ENCODE measurements at regions of chr1 and their contacts with region 1.

Region 1: GRCh38 chr1:11719313-11720032 is 16.5 kb upstream of the AGTRAP start:
- DNase-seq: peak; percentile 80
- CTCF ChIP-seq: peak; percentile 97

Region 2: GRCh38 chr1:11658308-11658941 is 61.0 kb before region 1 on chr1:
- CTCF ChIA-PET with region 1: interaction called, 84 read pairs
- POLR2A ChIA-PET with region 1: no interaction called
- DNase-seq: no peak
- CTCF ChIP-seq: no peak

Region 3: DNA sequence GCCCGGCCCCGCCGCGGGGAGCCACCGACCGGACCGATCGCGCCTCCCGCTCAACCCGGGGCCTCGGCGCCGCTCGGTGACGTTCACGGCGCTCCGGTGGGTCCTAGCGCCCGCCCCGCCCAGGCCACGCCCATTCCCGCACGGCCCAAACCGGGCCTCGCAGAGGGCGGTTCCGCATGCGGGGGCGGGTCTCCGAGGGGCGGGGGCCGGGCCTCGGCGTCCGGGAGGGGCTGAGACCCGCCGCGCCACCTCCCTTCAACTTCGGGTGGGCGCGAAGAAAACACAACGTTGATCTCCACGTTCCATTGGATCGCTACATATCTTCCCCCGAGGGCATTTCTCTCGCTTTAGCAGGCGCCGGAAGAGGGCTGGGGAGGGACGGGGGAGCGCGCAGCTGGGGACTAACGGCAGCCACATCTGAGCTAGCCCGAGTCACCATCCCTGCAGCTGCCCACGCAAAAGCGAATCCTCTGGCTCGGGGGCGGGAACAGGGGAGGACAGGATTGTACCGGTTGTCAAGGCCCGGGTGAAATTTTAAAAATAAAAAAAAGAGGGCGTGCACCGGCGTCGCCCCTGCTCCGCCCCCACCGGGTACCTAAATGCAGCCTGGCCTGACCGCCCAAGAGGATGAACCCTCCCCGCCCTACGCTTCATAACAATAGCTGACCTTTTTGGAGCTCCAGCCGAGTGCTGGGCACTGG is 38.3 kb before region 1 on chr1 and contains the start of gene MAD2L2:
- CTCF ChIA-PET with region 1: interaction called, 13 read pairs
- POLR2A ChIA-PET with region 1: no interaction called
- DNase-seq: peak; percentile 97
- CTCF ChIP-seq: no peak

Region 4: GRCh38 chr1:11707621-11708276 is 11.7 kb before region 1 on chr1:
- CTCF ChIA-PET with region 1: interaction called, 17 read pairs
- POLR2A ChIA-PET with region 1: no interaction called
- DNase-seq: no peak
- CTCF ChIP-seq: no peak

Region 5: DNA sequence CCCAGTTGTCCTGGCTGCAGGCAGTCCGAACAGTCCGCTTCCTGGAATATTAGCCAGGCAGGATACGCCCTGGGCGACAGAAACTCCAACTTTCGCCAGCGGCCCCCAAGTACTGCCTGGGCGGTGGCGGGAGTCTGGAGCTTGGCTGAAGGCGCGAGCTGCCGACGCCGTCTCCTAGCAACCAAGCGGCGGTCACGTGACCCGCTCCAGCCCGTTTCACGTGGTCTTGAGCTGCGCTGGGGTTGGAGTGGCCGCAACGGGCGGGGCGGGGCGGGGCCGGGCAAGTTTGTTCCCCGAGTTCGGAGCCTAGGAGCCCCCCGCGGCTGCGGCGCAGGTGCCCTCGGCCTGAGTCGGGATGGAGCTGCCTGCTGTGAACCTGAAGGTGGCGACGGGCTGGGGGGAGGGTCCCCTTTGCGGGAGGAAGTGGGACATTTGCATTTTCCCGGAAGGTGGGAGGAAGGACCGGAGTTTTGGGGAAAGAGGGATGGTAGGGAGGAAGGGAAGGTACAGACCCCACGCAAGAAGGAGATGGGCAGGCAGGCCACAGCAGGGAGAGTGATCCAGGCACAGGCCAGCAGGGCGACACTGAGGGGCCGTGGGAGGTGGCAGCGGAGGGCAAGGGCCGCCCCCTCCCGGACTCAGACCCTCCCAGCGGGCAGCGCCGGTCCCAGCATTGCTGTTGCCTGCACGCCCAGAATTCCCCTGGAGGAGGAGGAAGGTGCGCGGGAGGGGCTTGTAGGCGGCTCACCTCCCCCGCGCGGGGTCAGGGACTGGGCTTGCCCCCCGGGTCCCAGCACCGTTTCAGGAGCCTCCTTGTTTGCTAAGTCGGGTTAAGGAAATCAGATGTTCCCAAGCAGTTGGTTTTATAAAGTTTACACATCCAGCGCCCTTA is 16.6 kb after region 1 on chr1 and contains the start of gene AGTRAP:
- CTCF ChIA-PET with region 1: interaction called, 17 read pairs
- POLR2A ChIA-PET with region 1: no interaction called
- DNase-seq: peak; percentile 94
- CTCF ChIP-seq: no peak